Transverse colon (tissue), 4 donors: ENCODE measurements at regions of chr1 and their contacts with region 1.

Region 1: DNA sequence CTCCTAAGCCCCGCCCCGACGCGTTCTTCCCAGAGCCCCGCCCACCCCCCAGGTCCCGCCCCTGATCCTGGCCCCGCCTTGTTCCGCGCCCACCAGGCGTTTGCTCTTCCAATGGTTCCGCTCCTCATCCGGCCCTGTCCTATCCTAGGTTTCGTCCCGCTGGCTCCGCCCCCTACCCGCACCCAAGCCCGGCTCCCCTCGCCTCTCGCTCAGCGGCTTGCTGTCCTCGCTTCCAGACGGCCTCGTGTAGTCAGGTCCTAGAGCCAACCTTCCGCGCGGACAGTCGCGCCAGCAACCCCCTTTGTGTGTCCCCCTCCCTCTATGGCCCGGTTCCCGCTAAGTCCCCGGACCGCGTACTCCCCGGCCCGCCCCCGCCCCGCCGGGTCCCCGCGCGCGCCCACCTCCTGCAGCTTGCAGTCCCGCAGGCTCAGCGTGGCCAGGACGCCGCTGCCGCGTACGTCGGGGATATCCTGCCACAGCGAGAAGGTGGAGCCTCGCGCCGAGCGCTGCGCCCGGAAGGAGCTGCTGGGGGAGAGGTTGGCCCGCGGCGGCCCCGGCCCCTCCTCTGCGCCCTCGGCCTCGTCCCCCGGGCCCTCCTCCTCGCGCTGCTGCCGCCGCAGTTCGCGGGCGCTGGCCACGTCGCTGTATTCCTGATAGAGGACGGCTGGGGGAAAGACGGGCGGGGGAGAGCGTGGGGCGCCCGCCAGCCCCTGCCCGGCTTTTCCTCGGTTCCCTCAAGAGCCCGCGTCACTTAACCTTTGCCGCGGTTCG is 5.7 kb downstream of the ARHGEF19 start:
- DNase-seq: peak; percentile 98
- H3K4me3 ChIP-seq: peak overlapping the region; percentile 33 to 45 (median 44)
- H3K27ac ChIP-seq: peak overlapping the region; percentile 80 to 99 (median 96)
- H3K4me1 ChIP-seq: peaks cover 8 to 16% (median 14%) of the 10 kb centered on the region in 4 donors
- H3K27me3 ChIP-seq: no peaks in the 10 kb centered on the region
- CTCF ChIP-seq: no peak
- EP300 ChIP-seq: no peak
- POLR2A ChIP-seq: peak; percentile 85

Region 2: GRCh38 chr1:16111771-16112595 is 94.7 kb before region 1 on chr1:
- in situ Hi-C with region 1: no loop called
- intact Hi-C with region 1: no loop called
- DNase-seq: no peak
- H3K4me3 ChIP-seq: no peak overlapping the region
- H3K27ac ChIP-seq: no peak overlapping the region
- H3K4me1 ChIP-seq: no peaks in the 10 kb centered on the region
- H3K27me3 ChIP-seq: no peaks in the 10 kb centered on the region
- CTCF ChIP-seq: no peak
- EP300 ChIP-seq: no peak
- POLR2A ChIP-seq: no peak

Region 3: DNA sequence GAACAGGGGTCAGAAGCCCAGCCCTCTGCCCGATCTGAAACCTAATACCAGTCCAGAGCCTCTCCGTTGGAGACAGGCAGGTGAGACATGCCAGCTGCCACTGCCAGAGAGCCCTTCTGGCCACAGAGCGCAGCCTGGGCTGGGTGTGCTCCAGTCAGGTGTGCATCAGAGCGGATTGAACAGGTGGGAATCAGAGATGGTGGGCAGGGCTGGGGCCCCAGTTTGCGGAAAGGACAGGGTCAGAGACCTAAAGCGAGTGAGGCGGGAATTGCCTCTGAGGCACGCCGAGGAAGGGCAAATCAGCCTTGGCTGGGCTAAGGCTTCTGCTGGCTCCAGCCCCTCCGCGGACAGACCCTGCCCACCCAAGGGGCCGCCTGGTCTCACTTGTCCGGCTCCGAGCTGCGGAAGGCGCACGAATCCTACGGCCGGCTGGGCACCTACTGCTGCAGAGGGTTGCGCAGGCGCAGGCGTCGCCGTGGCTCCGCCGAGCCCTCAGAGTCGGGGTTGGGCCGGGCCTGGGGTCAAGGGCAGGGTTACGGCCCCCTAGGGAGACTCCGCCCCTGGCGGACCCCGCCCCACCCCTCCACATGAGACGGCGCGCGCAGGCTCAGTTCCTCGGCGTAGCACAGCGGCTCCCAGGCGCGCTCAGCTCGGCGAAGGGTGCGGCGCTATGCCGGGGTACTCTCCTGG is 19.9 kb after region 1 on chr1:
- in situ Hi-C with region 1: no loop called
- intact Hi-C with region 1: loop called (anchors 1 kb)
- DNase-seq: peak; percentile 58
- H3K4me3 ChIP-seq: peak overlapping the region in 2 of 4 donors; percentile 8 to 39
- H3K27ac ChIP-seq: no peak overlapping the region
- H3K4me1 ChIP-seq: peaks cover 0 to 16% (median 4%) of the 10 kb centered on the region in 4 donors
- H3K27me3 ChIP-seq: peaks cover 25% of the 10 kb centered on the region
- CTCF ChIP-seq: no peak
- EP300 ChIP-seq: no peak
- POLR2A ChIP-seq: no peak

Region 4: GRCh38 chr1:16243936-16244649 is 37.4 kb after region 1 on chr1:
- in situ Hi-C with region 1: no loop called
- intact Hi-C with region 1: loop called (anchors 5 kb)
- DNase-seq: peak; percentile 85
- H3K4me3 ChIP-seq: no peak overlapping the region
- H3K27ac ChIP-seq: no peak overlapping the region
- H3K4me1 ChIP-seq: peaks cover 14 to 23% (median 18%) of the 10 kb centered on the region in 4 donors
- H3K27me3 ChIP-seq: no peaks in the 10 kb centered on the region
- CTCF ChIP-seq: peak; percentile 83 to 90 (median 86)
- EP300 ChIP-seq: no peak
- POLR2A ChIP-seq: no peak

Region 5: GRCh38 chr1:16351994-16352841 is 145.5 kb after region 1 on chr1 and contains the start of gene FBXO42:
- in situ Hi-C with region 1: loop called in 1 of 4 experiments (anchors 25 kb)
- intact Hi-C with region 1: no loop called
- DNase-seq: peak; percentile 92
- H3K4me3 ChIP-seq: peak within 1 kb of the TSS; percentile 79 to 90 (median 86)
- H3K27ac ChIP-seq: peak within 1 kb of the TSS; percentile 92 to 95 (median 95)
- H3K4me1 ChIP-seq: peaks cover 12 to 39% (median 15%) of the 10 kb centered on the region in 4 donors
- H3K27me3 ChIP-seq: no peaks in the 10 kb centered on the region
- CTCF ChIP-seq: peak in 3 of 5 experiments; percentile 32 to 50 (median 43)
- EP300 ChIP-seq: no peak
- POLR2A ChIP-seq: peak; percentile 80
- total RNA-seq, gene FBXO42: 15.7 to 25.4 (median 18.8) TPM

Region 6: GRCh38 chr1:16409536-16410152 is 202.9 kb after region 1 on chr1:
- in situ Hi-C with region 1: no loop called
- intact Hi-C with region 1: no loop called
- DNase-seq: no peak
- H3K4me3 ChIP-seq: no peak overlapping the region
- H3K27ac ChIP-seq: no peak overlapping the region
- H3K4me1 ChIP-seq: no peaks in the 10 kb centered on the region
- H3K27me3 ChIP-seq: no peaks in the 10 kb centered on the region
- CTCF ChIP-seq: no peak
- EP300 ChIP-seq: no peak
- POLR2A ChIP-seq: no peak